Activated B cell treated with CpG ODN at 0.5 μM for 24 hours (primary cell): ENCODE measurements at regions of chr13 and their contacts with region 1.

Region 1: GRCh38 chr13:29707876-29708543 is 112.5 kb upstream of the SLC7A1 start:
- DNase-seq: no peak
- ATAC-seq: peak; percentile 40
- H3K4me3 Mint-ChIP-seq: no peak overlapping the region
- H3K27ac Mint-ChIP-seq: no peak overlapping the region
- H3K4me1 Mint-ChIP-seq: no peaks in the 10 kb centered on the region
- H3K27me3 Mint-ChIP-seq: peaks cover 21% of the 10 kb centered on the region
- CTCF ChIP-seq: no peak

Region 2: DNA sequence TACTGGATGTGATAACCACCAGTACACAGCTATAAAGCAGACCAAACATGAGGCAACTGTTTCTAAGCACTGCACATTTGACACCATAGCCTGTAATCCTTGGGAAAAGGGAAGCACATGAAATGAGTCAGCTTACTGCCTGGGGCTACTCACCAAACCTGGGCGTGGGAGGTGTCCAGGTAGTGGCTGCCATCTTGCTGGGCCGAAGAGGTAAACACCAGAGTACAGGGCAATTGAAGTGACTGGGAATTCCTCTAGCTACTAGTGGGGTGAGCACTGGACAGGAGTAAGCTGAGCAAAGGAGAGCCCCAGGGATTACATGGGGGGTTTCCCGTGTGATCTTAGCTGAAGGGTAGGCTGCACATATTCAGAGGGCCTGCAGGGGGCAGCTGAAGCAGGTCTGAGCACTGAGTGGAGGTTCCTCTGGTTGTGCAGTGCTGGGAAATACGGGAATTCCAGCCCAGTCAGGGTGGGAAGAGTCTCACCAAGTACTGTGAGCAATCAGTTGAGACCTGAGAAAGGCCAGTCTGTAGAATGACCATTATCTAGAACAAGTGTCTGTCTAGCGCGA is 253.0 kb before region 1 on chr13:
- CTCF ChIA-PET with region 1: no interaction called
- POLR2A ChIA-PET with region 1: no interaction called
- intact Hi-C with region 1: loop called (anchors 1 kb)
- DNase-seq: no peak
- ATAC-seq: peak; percentile 88
- H3K4me3 Mint-ChIP-seq: no peak overlapping the region
- H3K27ac Mint-ChIP-seq: no peak overlapping the region
- H3K4me1 Mint-ChIP-seq: no peaks in the 10 kb centered on the region
- H3K27me3 Mint-ChIP-seq: peaks cover 19% of the 10 kb centered on the region
- CTCF ChIP-seq: no peak

Region 3: GRCh38 chr13:29543230-29544215 is 164.5 kb before region 1 on chr13:
- CTCF ChIA-PET with region 1: no interaction called
- POLR2A ChIA-PET with region 1: no interaction called
- intact Hi-C with region 1: loop called (anchors 10 kb)
- DNase-seq: peak; percentile 19
- ATAC-seq: peak; percentile 97
- H3K4me3 Mint-ChIP-seq: no peak overlapping the region
- H3K27ac Mint-ChIP-seq: no peak overlapping the region
- H3K4me1 Mint-ChIP-seq: peaks cover 20% of the 10 kb centered on the region
- H3K27me3 Mint-ChIP-seq: no peaks in the 10 kb centered on the region
- CTCF ChIP-seq: no peak